ENCODE measurements at regions of chrX and their contacts with region 1.

Region 1: GRCh38 chrX:46903458-46904242 is 8.6 kb upstream of the JADE3 start:
- DNase-seq: peak; percentile 72 to 84 (median 78)
- ATAC-seq: peak; percentile 96 to 99 (median 98)
- H3K4me3 ChIP-seq: peak overlapping the region in 11 of 12 donors; percentile 16 to 60 (median 48)
- H3K27ac ChIP-seq: no peak overlapping the region
- H3K4me1 ChIP-seq: peaks cover 0 to 12% (median 0%) of the 10 kb centered on the region in 12 donors
- H3K27me3 ChIP-seq: peaks cover 0 to 42% (median 0%) of the 10 kb centered on the region in 9 donors
- CTCF ChIP-seq: peak; percentile 35 to 77 (median 61)
- POLR2A ChIP-seq: no peak

Region 2: DNA sequence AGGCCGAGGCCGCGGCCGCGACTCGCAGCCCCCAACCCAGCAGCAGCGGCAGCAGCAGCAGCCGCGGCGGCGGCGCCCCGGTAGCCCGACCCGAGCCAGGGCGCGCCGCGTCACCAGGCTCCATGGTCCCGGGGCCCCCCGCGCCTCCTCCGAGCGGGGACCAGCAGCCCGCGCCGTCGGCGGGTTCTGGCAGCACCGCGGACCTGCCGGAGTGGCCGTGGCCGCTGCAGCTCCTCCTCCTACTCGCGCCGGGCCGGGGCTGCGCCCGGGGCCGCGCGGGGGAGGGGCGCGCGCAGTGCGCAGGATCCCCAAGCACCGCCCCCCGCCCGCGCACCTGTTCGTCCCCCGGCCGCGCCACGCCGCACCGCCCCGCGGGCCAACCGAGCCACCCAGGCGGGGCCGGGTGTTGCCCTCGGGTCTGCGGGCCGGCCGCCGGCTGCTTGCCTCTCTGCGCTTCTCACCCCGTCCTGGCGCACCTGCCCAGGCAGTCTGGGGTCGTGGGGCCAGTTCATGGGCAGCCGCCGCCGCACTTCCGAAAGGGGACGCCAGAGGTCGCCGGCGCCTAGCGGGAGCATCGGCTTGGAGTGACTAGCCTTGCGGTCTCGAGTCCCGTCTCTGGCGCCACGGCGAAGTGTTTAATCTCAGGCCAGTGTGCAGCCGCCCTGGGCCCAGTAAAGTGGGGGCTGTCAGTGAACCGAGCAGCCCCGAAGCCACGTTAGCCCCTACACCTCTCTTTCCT is 144.6 kb before region 1 on chrX and contains the start of gene SLC9A7:
- intact Hi-C with region 1: no loop called
- DNase-seq: peak; percentile 59 to 87 (median 69)
- ATAC-seq: peak; percentile 55 to 90 (median 86)
- H3K4me3 ChIP-seq: peak within 1 kb of the TSS; percentile 9 to 61 (median 48)
- H3K27ac ChIP-seq: peak within 1 kb of the TSS in 2 of 12 donors; percentile 9 to 24
- H3K4me1 ChIP-seq: peaks cover 0 to 5% (median 0%) of the 10 kb centered on the region in 12 donors
- H3K27me3 ChIP-seq: peaks cover 0 to 23% (median 0%) of the 10 kb centered on the region in 9 donors
- CTCF ChIP-seq: peak; percentile 65 to 84 (median 72)
- POLR2A ChIP-seq: no peak
- total RNA-seq, gene SLC9A7: 1.9 to 8.6 (median 2.6) TPM

Region 3: DNA sequence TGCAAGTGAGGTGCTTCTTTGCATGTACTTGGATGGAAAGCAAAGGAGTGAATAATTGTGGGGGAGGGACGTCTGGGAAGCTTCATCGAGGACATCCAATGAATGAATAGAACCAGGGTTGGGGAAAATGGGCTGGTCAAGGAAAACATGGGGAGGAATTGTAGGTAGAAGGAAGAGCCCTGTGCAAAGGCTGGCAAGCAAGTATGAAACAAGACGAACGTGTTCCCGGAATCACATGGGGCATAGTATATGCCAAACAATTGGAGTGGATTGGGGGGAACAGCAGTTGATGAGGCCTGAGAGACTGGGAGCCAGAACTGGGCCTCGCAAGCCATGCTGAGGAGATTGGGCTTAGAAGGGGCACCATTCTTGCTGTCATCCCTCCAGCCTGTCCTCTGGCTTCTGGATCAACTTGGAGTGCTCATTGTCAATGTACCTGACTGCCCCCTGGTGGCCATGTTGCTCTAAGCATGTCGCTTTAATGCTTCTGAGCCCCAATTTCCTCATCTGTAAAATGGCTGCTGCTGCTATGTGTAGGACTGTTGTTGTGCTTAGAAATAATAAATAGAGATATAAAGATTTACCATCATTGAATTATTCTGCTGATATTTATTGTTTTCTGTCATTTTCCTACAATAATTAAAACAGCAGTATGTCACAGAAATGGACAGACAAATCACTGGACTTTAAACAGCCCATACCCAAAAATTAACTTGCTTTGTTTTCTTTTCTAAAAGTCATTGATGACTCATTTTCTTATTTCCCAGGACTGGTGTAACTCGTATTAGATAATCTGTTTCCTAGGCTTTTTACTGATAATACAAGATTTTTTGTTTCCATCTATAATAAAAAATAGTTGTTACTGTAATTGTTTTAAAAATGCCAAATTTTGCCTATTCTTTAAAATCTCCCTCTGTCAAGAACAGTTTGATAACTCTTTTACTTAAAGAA is 75.0 kb after region 1 on chrX:
- intact Hi-C with region 1: loop called in 7 of 10 experiments (anchors 2 to 5 kb)
- DNase-seq: peak; percentile 45 to 75 (median 63)
- ATAC-seq: peak in 3 of 4 donors; percentile 53 to 66 (median 59)
- H3K4me3 ChIP-seq: no peak overlapping the region
- H3K27ac ChIP-seq: no peak overlapping the region
- H3K4me1 ChIP-seq: peaks cover 0 to 5% (median 0%) of the 10 kb centered on the region in 12 donors
- H3K27me3 ChIP-seq: peaks cover 0 to 19% (median 0%) of the 10 kb centered on the region in 9 donors
- CTCF ChIP-seq: peak; percentile 39 to 73 (median 56)
- POLR2A ChIP-seq: no peak

Region 4: GRCh38 chrX:46984705-46985104 is 81.1 kb after region 1 on chrX:
- intact Hi-C with region 1: loop called in 7 of 10 experiments (anchors 2 to 5 kb)
- DNase-seq: no peak
- ATAC-seq: peak in 1 of 4 donors; percentile 39
- H3K4me3 ChIP-seq: no peak overlapping the region
- H3K27ac ChIP-seq: no peak overlapping the region
- H3K4me1 ChIP-seq: no peaks in the 10 kb centered on the region
- H3K27me3 ChIP-seq: peaks cover 0 to 19% (median 0%) of the 10 kb centered on the region in 9 donors
- CTCF ChIP-seq: no peak
- POLR2A ChIP-seq: no peak

Region 5: GRCh38 chrX:47030339-47030738 is 126.7 kb after region 1 on chrX:
- intact Hi-C with region 1: loop called in 9 of 10 experiments (anchors 2 to 10 kb)
- DNase-seq: peak in 1 of 5 donors; percentile 5
- ATAC-seq: no peak
- H3K4me3 ChIP-seq: no peak overlapping the region
- H3K27ac ChIP-seq: no peak overlapping the region
- H3K4me1 ChIP-seq: no peaks in the 10 kb centered on the region
- H3K27me3 ChIP-seq: peaks cover 0 to 34% (median 0%) of the 10 kb centered on the region in 9 donors
- CTCF ChIP-seq: peak; percentile 47 to 68 (median 58)
- POLR2A ChIP-seq: no peak

Region 6: DNA sequence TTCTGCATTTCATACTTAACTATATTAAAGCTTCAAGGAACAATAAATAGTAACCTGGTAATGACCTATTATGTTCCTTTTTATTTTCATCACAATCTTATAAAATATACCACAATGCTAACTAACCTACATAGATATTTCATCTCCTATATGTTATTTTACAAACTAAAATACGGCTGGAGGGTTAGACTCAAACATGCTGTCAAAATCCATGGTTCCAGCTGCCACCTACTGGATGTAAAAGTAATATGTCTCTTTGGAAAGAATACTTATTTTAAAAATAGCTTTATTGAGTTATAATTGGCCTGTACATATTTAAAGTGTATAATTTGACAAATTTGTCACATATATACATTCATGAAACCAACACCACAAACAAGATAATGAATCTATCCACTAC is 189.6 kb after region 1 on chrX:
- intact Hi-C with region 1: loop called in 1 of 10 experiments (anchors 5 kb)
- DNase-seq: no peak
- ATAC-seq: no peak
- H3K4me3 ChIP-seq: no peak overlapping the region
- H3K27ac ChIP-seq: no peak overlapping the region
- H3K4me1 ChIP-seq: no peaks in the 10 kb centered on the region
- H3K27me3 ChIP-seq: peaks cover 0 to 8% (median 0%) of the 10 kb centered on the region in 9 donors
- CTCF ChIP-seq: peak in 10 of 12 donors; percentile 10 to 53 (median 36)
- POLR2A ChIP-seq: no peak

Measured in heart left ventricle (tissue), 16 donors.